Kidney (tissue), 22 donors: ENCODE measurements at regions of chr1 and their contacts with region 1.

Region 1: GRCh38 chr1:111222308-111223125 is 5.0 kb upstream of the CHI3L2 start:
- DNase-seq: peak; percentile 57 to 88 (median 72)
- H3K4me3 ChIP-seq: no peak overlapping the region
- H3K27ac ChIP-seq: no peak overlapping the region
- H3K4me1 ChIP-seq: peaks cover 0 to 4% (median 0%) of the 10 kb centered on the region in 3 donors
- H3K27me3 ChIP-seq: no peaks in the 10 kb centered on the region
- CTCF ChIP-seq: peak; percentile 86

Region 2: DNA sequence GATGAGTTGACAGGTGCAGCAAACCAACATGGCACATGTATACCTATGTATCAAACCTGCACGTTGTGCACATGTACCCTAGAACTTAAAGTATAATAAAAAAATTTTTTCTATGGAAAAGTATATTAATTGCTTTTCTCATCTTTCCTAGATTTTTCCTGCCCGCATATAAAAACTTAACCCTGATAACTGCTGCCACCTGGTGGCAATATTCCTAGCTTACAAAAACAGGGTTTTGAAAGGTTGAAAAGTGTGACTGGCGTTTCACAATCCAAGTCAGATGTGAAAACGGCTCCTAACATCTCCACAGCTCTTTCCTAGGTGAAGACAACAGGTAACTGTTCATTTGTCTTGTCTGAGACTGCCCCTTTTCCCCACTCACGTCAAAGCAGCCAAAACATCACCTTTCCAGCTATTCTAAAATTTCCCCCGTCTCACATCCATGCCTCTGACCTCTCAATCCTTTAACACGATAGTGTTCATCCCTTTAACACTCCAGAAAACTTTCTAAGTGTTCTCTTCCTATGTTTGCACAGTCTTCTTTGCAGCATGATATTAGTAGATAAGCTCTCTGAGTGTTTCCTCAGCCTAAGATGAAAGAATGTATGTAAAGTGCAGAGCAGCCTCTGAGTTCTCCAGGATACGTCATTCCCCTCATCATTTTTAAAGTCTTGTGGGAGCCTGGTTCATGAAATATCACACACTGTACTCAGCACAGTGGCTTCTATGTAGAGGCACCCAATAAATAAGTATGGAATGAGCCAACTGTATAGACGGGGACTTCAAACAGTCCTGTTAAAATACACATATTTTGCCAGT is 177.5 kb after region 1 on chr1:
- intact Hi-C with region 1: loop called (anchors 10 kb)
- DNase-seq: peak in 3 of 5 donors; percentile 26 to 59 (median 32)
- H3K4me3 ChIP-seq: no peak overlapping the region
- H3K27ac ChIP-seq: no peak overlapping the region
- H3K4me1 ChIP-seq: no peaks in the 10 kb centered on the region
- H3K27me3 ChIP-seq: no peaks in the 10 kb centered on the region
- CTCF ChIP-seq: peak; percentile 54